SK-N-SH (cell line): ENCODE measurements at regions of chr2 and their contacts with region 1.

Region 1: GRCh38 chr2:27133905-27134780 is at the start of gene PREB:
- DNase-seq: peak; percentile 100
- H3K4me3 ChIP-seq: peak within 1 kb of the TSS; percentile 94 to 97
- H3K27ac ChIP-seq: peak within 1 kb of the TSS; percentile 55 to 71; a peak in 3 of 4 replicates
- H3K4me1 ChIP-seq: peaks cover 7 to 14% of the 10 kb centered on the region in 2 experiments; a peak in 3 of 4 replicates
- H3K27me3 ChIP-seq: 0 out of 2 replicates have a peak, but pooled peaks cover 1% of the 10 kb centered on the region
- CTCF ChIP-seq: peak; percentile 56
- EP300 ChIP-seq: no peak
- RAD21 ChIP-seq: peak; percentile 51
- polyA plus RNA-seq, gene PREB: 47.9 and 51.3 TPM in 2 replicates

Region 2: GRCh38 chr2:27102329-27102728 is 31.8 kb before region 1 on chr2:
- CTCF ChIA-PET with region 1: interaction called, 11 read pairs
- POLR2A ChIA-PET with region 1: no interaction called
- DNase-seq: no peak
- H3K4me3 ChIP-seq: no peak overlapping the region
- H3K27ac ChIP-seq: no peak overlapping the region
- H3K4me1 ChIP-seq: peaks cover 0 to under 1% of the 10 kb centered on the region in 2 experiments; a peak in 1 of 4 replicates
- H3K27me3 ChIP-seq: no peaks in the 10 kb centered on the region
- CTCF ChIP-seq: no peak
- EP300 ChIP-seq: no peak
- RAD21 ChIP-seq: no peak

Region 3: DNA sequence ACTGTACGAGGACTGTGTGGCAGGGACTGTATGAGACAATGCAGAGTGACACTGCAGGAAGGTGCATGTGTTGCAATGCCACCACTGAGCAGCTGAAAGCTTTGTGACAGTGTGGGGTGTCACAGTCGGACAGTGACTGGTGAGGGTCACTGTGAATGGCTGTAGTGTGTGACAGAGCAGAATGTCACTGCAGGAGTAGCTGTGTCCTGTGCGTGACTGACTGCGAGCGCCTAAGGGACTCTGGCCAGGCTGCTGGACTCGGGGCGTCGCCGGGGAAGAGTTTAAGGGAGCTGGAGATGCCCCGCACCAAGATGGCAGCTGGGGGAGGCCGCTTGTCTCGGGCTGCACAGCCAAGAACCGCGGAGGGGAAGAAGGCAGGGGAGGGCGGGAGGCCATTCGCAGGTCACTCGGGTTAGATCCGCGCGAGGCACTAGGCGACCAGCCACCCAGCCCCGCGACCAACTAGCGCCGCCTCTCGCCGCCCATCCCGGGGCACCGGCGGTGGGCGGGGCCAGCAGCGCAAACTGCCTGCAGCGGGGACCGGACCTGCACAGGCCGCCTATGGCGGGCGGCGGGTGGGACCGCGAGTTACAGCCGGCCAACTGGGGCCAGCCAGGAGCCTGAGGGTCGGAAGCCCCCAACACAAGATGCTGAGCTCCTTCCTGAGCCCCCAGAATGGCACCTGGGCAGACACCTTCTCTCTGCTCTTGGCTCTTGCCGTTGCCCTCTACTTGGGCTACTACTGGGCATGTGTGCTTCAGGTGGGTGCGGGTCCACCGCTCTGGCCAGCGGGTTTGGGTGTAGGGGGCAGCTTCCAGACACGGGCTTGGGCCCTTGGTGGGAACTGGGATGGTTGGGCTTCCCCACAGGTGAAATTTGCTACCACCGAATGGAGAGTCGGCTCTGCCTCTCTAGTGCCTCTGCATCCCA is 10.6 kb before region 1 on chr2 and contains the start of gene ABHD1:
- CTCF ChIA-PET with region 1: interaction called, 20 read pairs
- POLR2A ChIA-PET with region 1: interaction called, 18 read pairs
- DNase-seq: peak; percentile 94
- H3K4me3 ChIP-seq: peak within 1 kb of the TSS; percentile 54 to 59
- H3K27ac ChIP-seq: peak within 1 kb of the TSS in 1 of 2 experiments; percentile 64; a peak in 1 of 4 replicates
- H3K4me1 ChIP-seq: peaks cover 0 to 18% of the 10 kb centered on the region in 2 experiments; a peak in 1 of 4 replicates
- H3K27me3 ChIP-seq: no peaks in the 10 kb centered on the region
- CTCF ChIP-seq: no peak
- EP300 ChIP-seq: no peak
- RAD21 ChIP-seq: no peak
- polyA plus RNA-seq, gene ABHD1: 3.3 and 4.1 TPM in 2 replicates

Region 4: DNA sequence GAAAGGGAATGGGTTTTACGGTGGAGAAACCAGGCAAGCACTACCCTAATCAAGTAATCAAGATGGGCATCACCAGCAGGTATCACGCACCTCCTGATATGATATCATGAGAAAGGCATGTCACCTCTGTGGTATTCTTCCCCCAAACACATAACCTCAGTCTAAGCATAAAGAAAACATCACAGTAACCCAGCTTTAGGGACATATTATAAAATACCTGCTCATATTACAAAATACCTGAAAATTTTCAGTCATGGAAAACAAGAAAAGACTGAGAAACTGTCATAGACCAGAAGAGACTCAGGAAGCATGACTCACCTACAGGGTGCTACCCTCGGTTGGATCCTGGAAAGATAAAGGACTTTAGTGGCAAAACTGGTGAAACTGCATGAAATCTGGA is 393.0 kb after region 1 on chr2:
- CTCF ChIA-PET with region 1: no interaction called
- POLR2A ChIA-PET with region 1: no interaction called
- DNase-seq: no peak
- H3K4me3 ChIP-seq: no peak overlapping the region
- H3K27ac ChIP-seq: no peak overlapping the region
- H3K4me1 ChIP-seq: no peaks in the 10 kb centered on the region
- H3K27me3 ChIP-seq: no peaks in the 10 kb centered on the region
- CTCF ChIP-seq: no peak
- EP300 ChIP-seq: no peak
- RAD21 ChIP-seq: no peak